ENCODE measurements at regions of chr2 and their contacts with region 1.

Region 1: DNA sequence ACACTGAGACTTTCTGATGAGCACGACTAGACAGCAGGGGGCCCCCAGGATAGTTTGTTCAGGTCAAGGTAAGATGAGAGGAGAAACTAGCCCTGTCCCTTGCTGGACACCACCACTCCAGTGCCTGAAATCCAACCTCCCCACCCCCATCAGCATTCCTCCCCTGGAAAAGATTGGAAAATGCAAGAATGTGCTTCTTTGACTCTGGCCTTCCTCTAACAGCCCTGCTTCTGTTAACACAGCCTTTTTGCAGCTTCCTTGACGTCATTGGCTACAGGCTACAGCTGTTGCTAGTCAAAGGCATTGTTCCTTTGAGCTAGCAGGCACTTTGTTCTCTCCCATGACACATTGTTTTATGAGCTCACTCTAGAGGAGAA is 20.1 kb upstream of the LTBP1 start:
- DNase-seq: no peak
- ATAC-seq: peak in 6 of 8 donors; percentile 44 to 67 (median 56)
- H3K4me3 ChIP-seq: no peak overlapping the region
- H3K27ac ChIP-seq: no peak overlapping the region
- H3K4me1 ChIP-seq: peaks cover 0 to 4% (median 0%) of the 10 kb centered on the region in 9 donors
- H3K27me3 ChIP-seq: peaks cover 0 to 10% (median 0%) of the 10 kb centered on the region in 7 donors
- CTCF ChIP-seq: no peak

Region 2: DNA sequence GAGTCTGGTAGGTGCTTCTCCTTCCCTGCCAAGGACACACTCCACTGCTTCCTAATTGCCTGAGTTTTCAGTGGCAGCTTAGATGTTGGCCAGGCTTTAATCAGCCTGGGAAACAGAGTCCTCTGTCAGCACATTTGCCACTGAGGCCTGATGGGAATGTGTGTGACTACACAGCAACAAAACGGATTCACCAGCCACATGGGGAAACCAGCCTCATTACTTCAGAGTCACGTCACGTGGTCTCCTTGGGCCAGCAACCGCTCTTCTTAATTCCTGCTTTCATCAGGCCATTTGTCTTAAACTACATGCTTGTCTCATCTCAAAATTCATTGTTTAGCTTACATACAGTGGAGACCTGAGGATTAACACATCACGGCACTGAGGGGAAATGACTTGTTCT is 73.8 kb before region 1 on chr2:
- intact Hi-C with region 1: loop called in 1 of 10 experiments (anchors 10 kb)
- DNase-seq: no peak
- ATAC-seq: no peak
- H3K4me3 ChIP-seq: no peak overlapping the region
- H3K27ac ChIP-seq: no peak overlapping the region
- H3K4me1 ChIP-seq: no peaks in the 10 kb centered on the region
- H3K27me3 ChIP-seq: no peaks in the 10 kb centered on the region
- CTCF ChIP-seq: no peak

Region 3: GRCh38 chr2:32904751-32905150 is 21.9 kb before region 1 on chr2:
- intact Hi-C with region 1: no loop called
- DNase-seq: no peak
- ATAC-seq: no peak
- H3K4me3 ChIP-seq: no peak overlapping the region
- H3K27ac ChIP-seq: no peak overlapping the region
- H3K4me1 ChIP-seq: peaks cover 0 to 5% (median 0%) of the 10 kb centered on the region in 9 donors
- H3K27me3 ChIP-seq: no peaks in the 10 kb centered on the region
- CTCF ChIP-seq: no peak

Measured in heart right ventricle (tissue), 16 donors.